Aorta (tissue), 5 donors: ENCODE measurements at regions of chr14 and their contacts with region 1.

Region 1: DNA sequence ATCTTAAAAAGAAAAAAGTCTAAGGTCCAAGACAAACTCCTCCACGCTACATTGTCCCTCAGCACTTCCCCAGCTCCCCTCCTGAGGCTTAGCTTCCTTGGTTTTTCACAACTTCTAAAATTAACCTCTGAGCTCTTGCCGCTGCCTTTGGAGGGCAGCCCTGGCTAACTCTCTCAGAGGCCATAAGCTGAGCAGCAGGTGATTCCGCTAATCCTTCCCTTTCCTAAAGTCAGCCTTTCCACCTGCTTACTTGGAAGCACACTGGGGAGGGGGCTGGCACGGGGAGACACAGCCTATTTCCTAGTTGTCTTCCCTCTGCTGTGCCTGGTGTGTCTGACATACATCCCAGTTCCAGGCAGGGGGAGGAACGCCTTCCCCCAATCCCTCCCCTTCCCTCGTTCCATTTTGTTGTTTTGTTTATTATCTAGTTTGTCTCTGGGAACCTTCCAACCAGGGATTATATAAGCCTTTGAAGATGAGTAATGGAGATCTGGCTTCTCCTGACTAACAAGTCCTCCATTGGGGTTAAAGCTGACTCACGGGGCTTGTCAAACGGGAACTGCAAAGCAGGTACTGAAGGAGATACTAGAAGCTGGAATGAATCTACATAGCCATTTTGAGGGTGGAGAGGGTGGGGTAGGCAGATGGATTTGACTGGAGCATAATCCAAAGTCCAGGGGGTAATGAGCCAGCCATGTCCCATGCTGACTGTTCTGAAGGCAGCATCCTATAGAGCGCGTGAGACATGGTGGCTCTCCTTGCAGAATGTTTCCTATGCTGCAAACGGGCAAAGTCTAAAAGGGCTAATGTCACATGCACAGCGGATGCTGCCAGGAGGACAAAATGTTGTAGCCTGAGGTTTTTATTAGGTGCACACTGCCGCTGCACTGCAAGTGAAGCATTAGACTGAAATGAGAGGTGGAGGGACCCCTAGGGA is 230.8 kb downstream of the FOXN3 start:
- DNase-seq: no peak
- ATAC-seq: peak; percentile 42
- H3K4me3 ChIP-seq: no peak overlapping the region
- H3K27ac ChIP-seq: peak overlapping the region; percentile 47 to 60
- H3K4me1 ChIP-seq: peaks cover 4 to 6% of the 10 kb centered on the region in 2 donors
- H3K27me3 ChIP-seq: no peaks in the 10 kb centered on the region

Region 2: DNA sequence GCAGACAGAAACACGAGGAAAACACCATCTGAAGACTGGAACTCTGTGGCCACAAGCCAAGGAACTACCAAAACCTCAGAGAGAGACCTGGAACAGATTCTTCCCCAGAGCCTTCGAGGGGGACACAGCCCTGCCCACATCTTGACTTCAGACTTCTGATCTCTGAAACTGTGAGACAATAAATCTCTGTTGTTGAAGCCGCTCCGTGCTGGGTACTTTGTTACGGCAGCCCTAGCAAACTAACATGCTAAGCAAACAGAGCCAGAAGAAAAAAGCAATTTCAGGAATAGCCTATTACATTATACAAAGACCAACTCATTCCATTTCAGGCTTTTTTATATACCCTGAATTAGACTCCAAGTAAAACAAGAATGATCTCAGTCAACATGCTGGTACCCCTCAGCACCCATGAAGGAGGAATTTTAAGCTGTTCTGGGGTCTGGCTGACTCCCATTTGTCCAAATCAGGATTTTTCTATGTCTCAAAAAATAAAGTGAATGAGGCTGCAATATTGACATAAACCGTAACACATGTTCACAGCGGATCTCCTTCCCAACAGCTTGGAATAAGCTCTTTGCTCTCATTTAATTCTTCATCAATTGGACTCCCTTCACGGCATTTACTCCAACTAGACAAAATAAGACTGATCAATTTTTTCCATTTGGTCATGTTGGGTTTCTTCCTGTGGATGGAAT is 40.8 kb after region 1 on chr14:
- intact Hi-C with region 1: loop called in 1 of 2 experiments (anchors 5 kb)
- DNase-seq: no peak
- ATAC-seq: peak; percentile 62
- H3K4me3 ChIP-seq: no peak overlapping the region
- H3K27ac ChIP-seq: peak overlapping the region; percentile 77 to 93
- H3K4me1 ChIP-seq: peaks cover 3 to 10% of the 10 kb centered on the region in 2 donors
- H3K27me3 ChIP-seq: no peaks in the 10 kb centered on the region

Region 3: GRCh38 chr14:89455412-89455811 is 269.2 kb after region 1 on chr14:
- intact Hi-C with region 1: no loop called
- DNase-seq: no peak
- ATAC-seq: no peak
- H3K4me3 ChIP-seq: no peak overlapping the region
- H3K27ac ChIP-seq: no peak overlapping the region
- H3K4me1 ChIP-seq: no peaks in the 10 kb centered on the region
- H3K27me3 ChIP-seq: no peaks in the 10 kb centered on the region